Activated T-helper 2 cell treated with anti-CD3 and anti-CD28 coated beads, Interferon-gamma antibody, Interleukin-2, Interleukin-4, amounts not matched to agents 10 μg/mL and 5 μg/mL and 100 μg/mL, durations not matched to agents 14 hours and 24 hours and 36 hours (primary cell): ENCODE measurements at regions of chr7 and their contacts with region 1.

Region 1: GRCh38 chr7:105678811-105679495 is 97.7 kb upstream of the EFCAB10 start:
- DNase-seq: peak; percentile 19
- H3K4me3 Mint-ChIP-seq: peak overlapping the region; percentile 89
- H3K27ac Mint-ChIP-seq: peak overlapping the region; percentile 94
- H3K4me1 Mint-ChIP-seq: peaks cover 57% of the 10 kb centered on the region
- H3K27me3 Mint-ChIP-seq: no peaks in the 10 kb centered on the region

Region 2: DNA sequence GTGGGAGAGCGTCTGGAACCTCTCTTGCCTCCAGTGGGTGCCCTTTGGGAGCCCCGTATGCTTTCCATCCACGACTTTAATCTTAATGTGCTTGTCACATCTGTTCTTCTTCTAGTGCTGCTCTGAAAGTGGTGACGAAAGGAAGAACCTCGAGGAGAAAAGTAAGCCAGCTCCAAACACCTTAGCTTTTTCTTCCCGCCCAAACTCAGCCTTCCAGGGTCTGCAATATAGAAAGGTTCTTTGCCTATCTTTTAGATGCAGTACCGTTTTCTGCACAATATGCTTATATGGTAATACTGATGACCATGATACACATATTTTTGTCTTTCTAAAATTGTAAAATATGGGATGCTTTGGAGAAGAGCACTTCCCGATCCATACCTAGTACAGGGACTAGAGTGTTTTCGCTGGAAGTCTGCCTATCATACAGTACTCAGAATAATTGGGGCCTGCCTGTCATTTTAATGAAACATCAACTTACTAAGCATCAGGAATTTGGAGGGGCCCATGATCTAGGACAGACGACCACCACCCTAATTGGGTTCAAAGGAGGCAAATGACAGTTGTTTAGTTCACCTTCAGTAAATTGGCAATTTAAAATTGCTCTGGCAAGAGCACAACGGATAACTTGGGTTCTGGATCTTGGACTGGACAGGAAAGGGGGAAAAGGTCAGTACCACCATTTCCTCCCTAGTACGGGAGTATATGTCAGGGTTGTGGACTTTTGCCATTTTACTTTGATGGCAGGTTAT is 146.1 kb before region 1 on chr7:
- intact Hi-C with region 1: no loop called
- DNase-seq: no peak
- H3K4me3 Mint-ChIP-seq: peak overlapping the region; percentile 91
- H3K27ac Mint-ChIP-seq: peak overlapping the region; percentile 92
- H3K4me1 Mint-ChIP-seq: peaks cover 18% of the 10 kb centered on the region
- H3K27me3 Mint-ChIP-seq: no peaks in the 10 kb centered on the region

Region 3: GRCh38 chr7:105691733-105692564 is 13.0 kb after region 1 on chr7:
- intact Hi-C with region 1: loop called (anchors 1 kb)
- DNase-seq: peak; percentile 44
- H3K4me3 Mint-ChIP-seq: peak overlapping the region; percentile 89
- H3K27ac Mint-ChIP-seq: peak overlapping the region; percentile 85
- H3K4me1 Mint-ChIP-seq: peaks cover 30% of the 10 kb centered on the region
- H3K27me3 Mint-ChIP-seq: no peaks in the 10 kb centered on the region

Region 4: DNA sequence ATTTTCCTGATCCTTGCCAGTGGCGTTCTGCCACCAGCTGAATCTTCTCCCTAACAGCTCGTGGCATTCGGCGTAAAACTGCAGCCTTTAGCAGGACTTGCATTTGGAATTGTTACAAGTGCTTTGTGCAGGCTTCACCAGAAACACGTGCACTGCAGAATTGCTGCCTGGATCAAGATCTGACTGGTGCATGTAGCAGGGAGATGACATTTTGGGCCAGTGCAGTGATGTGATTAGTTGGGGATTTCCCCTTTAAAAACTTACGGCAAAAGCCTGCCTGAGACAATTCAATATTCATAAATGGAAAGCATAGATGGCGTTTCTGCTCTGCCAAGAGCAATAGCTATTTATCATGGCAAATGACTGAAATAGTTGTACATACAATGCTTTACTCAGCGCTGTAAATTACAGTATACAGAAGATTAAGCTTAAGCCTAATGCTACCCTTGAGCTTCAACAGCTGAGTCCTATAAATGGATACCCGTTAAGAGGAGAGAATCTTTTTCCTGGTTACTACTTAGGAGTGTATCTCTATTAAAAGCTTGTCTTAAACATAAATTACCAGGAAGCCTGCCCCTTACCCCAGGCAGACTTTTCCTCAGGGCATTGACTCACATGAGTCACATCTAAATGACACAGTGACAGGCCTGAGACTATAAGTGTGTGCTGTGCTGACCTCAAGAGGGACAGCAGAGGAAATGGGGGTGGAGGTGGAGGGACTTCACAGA is 91.1 kb after region 1 on chr7:
- intact Hi-C with region 1: loop called (anchors 5 kb)
- DNase-seq: no peak
- H3K4me3 Mint-ChIP-seq: no peak overlapping the region
- H3K27ac Mint-ChIP-seq: no peak overlapping the region
- H3K4me1 Mint-ChIP-seq: peaks cover 38% of the 10 kb centered on the region
- H3K27me3 Mint-ChIP-seq: no peaks in the 10 kb centered on the region